Activated CD4-positive, alpha-beta T cell treated with anti-CD3 and anti-CD28 coated beads for 36 hours (primary cell): ENCODE measurements at regions of chr3 and their contacts with region 1.

Region 1: DNA sequence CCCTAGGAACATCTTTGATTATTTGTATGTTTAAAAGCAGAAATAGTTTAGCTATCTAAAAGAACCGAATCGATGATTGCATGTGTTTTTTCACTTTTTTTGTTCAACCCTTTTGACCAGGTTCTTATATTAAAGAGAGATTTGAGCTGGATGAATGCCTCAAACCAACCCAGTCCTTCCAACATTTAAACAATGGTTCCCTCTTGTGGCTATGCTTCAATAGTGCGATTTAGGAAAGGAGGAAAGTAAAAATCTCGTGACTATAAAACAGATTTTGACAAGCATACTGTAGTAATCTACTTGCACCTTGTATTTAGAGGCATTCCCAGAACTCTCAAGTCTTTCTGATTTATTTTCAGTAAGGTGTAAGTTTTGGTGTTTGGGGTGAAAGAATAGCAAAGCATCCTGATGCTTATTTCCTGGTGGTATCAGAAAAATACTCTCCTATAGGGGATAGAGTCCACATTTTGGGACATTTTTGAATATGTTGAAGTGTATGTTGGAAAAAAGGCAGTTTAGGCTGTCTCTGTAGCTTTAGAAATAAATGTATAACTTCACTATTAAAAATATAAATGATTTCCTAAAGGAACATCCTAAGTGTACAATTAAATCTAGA is 159.6 kb upstream of the KCNH8 start:
- DNase-seq: no peak
- ATAC-seq: peak; percentile 59
- H3K4me3 Mint-ChIP-seq: peak overlapping the region; percentile 73
- H3K27ac Mint-ChIP-seq: peak overlapping the region; percentile 96
- H3K4me1 Mint-ChIP-seq: peaks cover 35% of the 10 kb centered on the region
- H3K27me3 Mint-ChIP-seq: peaks cover 9% of the 10 kb centered on the region

Region 2: GRCh38 chr3:18424729-18425640 is 563.7 kb before region 1 on chr3 and contains the start of gene SATB1:
- CTCF ChIA-PET with region 1: interaction called, 3 read pairs
- POLR2A ChIA-PET with region 1: interaction called, 3 read pairs
- intact Hi-C with region 1: loop called in 1 of 2 experiments (anchors 1 kb)
- DNase-seq: peak; percentile 84
- ATAC-seq: peak; percentile 15
- H3K4me3 Mint-ChIP-seq: peak within 1 kb of the TSS; percentile 85
- H3K27ac Mint-ChIP-seq: peak within 1 kb of the TSS; percentile 97
- H3K4me1 Mint-ChIP-seq: peaks cover 71% of the 10 kb centered on the region
- H3K27me3 Mint-ChIP-seq: no peaks in the 10 kb centered on the region
- total RNA-seq, gene SATB1: 471 to 590 TPM

Region 3: DNA sequence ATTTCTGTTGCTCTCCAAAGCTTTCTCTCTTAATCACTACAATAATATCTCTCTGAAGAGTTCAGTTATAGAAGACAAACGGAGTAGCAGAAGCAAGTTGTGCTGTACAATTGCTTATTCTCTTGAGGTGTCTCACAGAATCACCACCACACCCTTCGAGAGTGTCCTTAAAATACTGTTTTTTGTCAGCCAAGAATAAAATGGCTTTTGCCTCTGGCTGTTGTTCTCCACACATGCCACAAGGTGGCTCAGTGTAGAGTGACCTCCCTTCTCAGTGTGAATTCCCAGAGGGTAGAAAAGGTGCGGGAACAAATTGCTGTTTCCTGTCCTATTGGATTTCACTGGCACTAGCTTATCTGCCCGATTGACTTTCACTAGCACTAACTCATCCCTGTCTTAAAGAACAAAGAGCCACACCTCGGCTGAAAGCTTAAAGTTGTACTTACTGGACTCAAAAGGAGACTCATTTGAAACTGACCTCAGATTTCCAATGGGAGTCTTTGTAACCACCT is 429.3 kb before region 1 on chr3:
- CTCF ChIA-PET with region 1: interaction called, 4 read pairs
- POLR2A ChIA-PET with region 1: no interaction called
- intact Hi-C with region 1: loop called (anchors 1 to 2 kb)
- DNase-seq: peak; percentile 50
- ATAC-seq: peak; percentile 57
- H3K4me3 Mint-ChIP-seq: peak overlapping the region; percentile 53
- H3K27ac Mint-ChIP-seq: peak overlapping the region; percentile 97
- H3K4me1 Mint-ChIP-seq: peaks cover 74% of the 10 kb centered on the region
- H3K27me3 Mint-ChIP-seq: no peaks in the 10 kb centered on the region

Region 4: DNA sequence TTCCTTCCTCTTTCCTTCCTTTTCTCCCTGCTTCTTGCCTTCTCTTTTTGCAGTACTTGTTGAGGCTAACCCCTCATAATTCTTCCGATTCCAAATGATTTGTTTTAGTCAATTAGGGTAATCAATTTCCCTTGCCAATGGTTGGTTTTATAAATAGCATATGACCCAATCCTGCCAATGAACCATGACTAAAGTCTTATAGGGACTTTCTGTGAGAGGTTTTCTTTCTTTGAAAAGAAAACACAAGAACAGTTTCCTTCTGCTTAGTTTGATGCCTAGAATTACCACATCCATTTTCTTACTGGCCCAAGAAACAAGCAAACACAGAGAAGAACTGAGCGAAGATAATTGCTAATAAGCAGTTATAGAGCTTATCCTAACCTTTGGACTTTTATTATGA is 271.1 kb before region 1 on chr3:
- CTCF ChIA-PET with region 1: no interaction called
- POLR2A ChIA-PET with region 1: no interaction called
- intact Hi-C with region 1: loop called in 1 of 2 experiments (anchors 2 kb)
- DNase-seq: no peak
- ATAC-seq: peak; percentile 38
- H3K4me3 Mint-ChIP-seq: peak overlapping the region; percentile 8
- H3K27ac Mint-ChIP-seq: peak overlapping the region; percentile 97
- H3K4me1 Mint-ChIP-seq: peaks cover 71% of the 10 kb centered on the region
- H3K27me3 Mint-ChIP-seq: no peaks in the 10 kb centered on the region

Region 5: DNA sequence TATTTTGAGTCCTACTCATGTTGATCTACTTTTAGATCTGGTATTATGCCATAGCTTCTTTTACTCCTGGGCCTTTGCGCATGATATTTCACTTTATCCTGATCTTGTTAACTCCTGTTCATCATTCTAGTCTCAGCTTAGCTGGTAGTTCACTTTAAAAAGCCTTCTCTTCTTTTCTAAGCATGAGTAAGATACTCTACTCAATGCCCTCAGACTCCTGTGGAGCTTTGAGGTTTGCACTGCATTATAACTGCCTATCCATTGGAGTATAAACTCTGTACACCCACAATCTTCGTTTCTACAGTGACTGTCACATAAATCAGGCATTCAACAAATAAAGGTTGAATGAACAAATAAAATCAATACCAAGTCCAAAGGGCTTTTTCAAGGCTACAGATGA is 198.3 kb before region 1 on chr3:
- CTCF ChIA-PET with region 1: interaction called, 12 read pairs
- POLR2A ChIA-PET with region 1: interaction called, 3 read pairs
- intact Hi-C with region 1: no loop called
- DNase-seq: no peak
- ATAC-seq: peak; percentile 20
- H3K4me3 Mint-ChIP-seq: no peak overlapping the region
- H3K27ac Mint-ChIP-seq: no peak overlapping the region
- H3K4me1 Mint-ChIP-seq: peaks cover 9% of the 10 kb centered on the region
- H3K27me3 Mint-ChIP-seq: no peaks in the 10 kb centered on the region

Region 6: GRCh38 chr3:18847583-18848197 is 141.0 kb before region 1 on chr3:
- CTCF ChIA-PET with region 1: interaction called, 37 read pairs
- POLR2A ChIA-PET with region 1: no interaction called
- intact Hi-C with region 1: loop called (anchors 1 to 2 kb)
- DNase-seq: no peak
- ATAC-seq: peak; percentile 57
- H3K4me3 Mint-ChIP-seq: no peak overlapping the region
- H3K27ac Mint-ChIP-seq: no peak overlapping the region
- H3K4me1 Mint-ChIP-seq: peaks cover 29% of the 10 kb centered on the region
- H3K27me3 Mint-ChIP-seq: no peaks in the 10 kb centered on the region